Activated CD8-positive, alpha-beta T cell treated with anti-CD3 and anti-CD28 coated beads, Interleukin-2, amount 10 ng/mL, durations not matched to agents 7 days and 5 days (primary cell): ENCODE measurements at regions of chr17 and their contacts with region 1.

Region 1: GRCh38 chr17:42609182-42609813 is at the starts of genes RETREG3 and TUBG1:
- DNase-seq: peak; percentile 99
- ATAC-seq: peak; percentile 92
- H3K4me3 Mint-ChIP-seq: peak within 1 kb of the TSS; percentile 100
- H3K27ac Mint-ChIP-seq: peak within 1 kb of the TSS; percentile 97
- H3K4me1 Mint-ChIP-seq: peaks cover 42% of the 10 kb centered on the region
- H3K27me3 Mint-ChIP-seq: no peaks in the 10 kb centered on the region
- total RNA-seq, gene RETREG3: 53.6 to 54.7 TPM
- total RNA-seq, gene TUBG1: 82.3 to 83.4 TPM

Region 2: GRCh38 chr17:42453439-42453838 is 155.9 kb before region 1 on chr17:
- CTCF ChIA-PET with region 1: no interaction called
- POLR2A ChIA-PET with region 1: no interaction called
- DNase-seq: no peak
- ATAC-seq: no peak
- H3K4me3 Mint-ChIP-seq: no peak overlapping the region
- H3K27ac Mint-ChIP-seq: no peak overlapping the region
- H3K4me1 Mint-ChIP-seq: peaks cover 21% of the 10 kb centered on the region
- H3K27me3 Mint-ChIP-seq: peaks cover 13% of the 10 kb centered on the region

Region 3: GRCh38 chr17:42677008-42677857 is 67.9 kb after region 1 on chr17:
- CTCF ChIA-PET with region 1: interaction called, 35 read pairs
- POLR2A ChIA-PET with region 1: interaction called, 5 read pairs
- DNase-seq: peak; percentile 100
- ATAC-seq: peak; percentile 77
- H3K4me3 Mint-ChIP-seq: peak overlapping the region; percentile 82
- H3K27ac Mint-ChIP-seq: peak overlapping the region; percentile 80
- H3K4me1 Mint-ChIP-seq: peaks cover 57% of the 10 kb centered on the region
- H3K27me3 Mint-ChIP-seq: peaks cover 44% of the 10 kb centered on the region